ENCODE measurements at regions of chr15 and their contacts with region 1.

Region 1: GRCh38 chr15:90071208-90071807 is 31.0 kb downstream of the IDH2 start:
- DNase-seq: peak; percentile 62
- H3K4me3 ChIP-seq: no peak overlapping the region
- H3K27ac ChIP-seq: no peak overlapping the region
- H3K27me3 ChIP-seq: no peaks in the 10 kb centered on the region
- CTCF ChIP-seq: peak; percentile 84

Region 2: GRCh38 chr15:89898614-89899294 is 172.6 kb before region 1 on chr15:
- CTCF ChIA-PET with region 1: interaction called, 10 read pairs
- POLR2A ChIA-PET with region 1: no interaction called
- DNase-seq: no peak
- H3K4me3 ChIP-seq: no peak overlapping the region
- H3K27ac ChIP-seq: no peak overlapping the region
- H3K27me3 ChIP-seq: no peaks in the 10 kb centered on the region
- CTCF ChIP-seq: peak; percentile 62

Region 3: GRCh38 chr15:90053685-90054466 is 17.4 kb before region 1 on chr15:
- CTCF ChIA-PET with region 1: interaction called, 11 read pairs
- POLR2A ChIA-PET with region 1: interaction called, 3 read pairs
- DNase-seq: no peak
- H3K4me3 ChIP-seq: no peak overlapping the region
- H3K27ac ChIP-seq: no peak overlapping the region
- H3K27me3 ChIP-seq: no peaks in the 10 kb centered on the region
- CTCF ChIP-seq: no peak

Region 4: DNA sequence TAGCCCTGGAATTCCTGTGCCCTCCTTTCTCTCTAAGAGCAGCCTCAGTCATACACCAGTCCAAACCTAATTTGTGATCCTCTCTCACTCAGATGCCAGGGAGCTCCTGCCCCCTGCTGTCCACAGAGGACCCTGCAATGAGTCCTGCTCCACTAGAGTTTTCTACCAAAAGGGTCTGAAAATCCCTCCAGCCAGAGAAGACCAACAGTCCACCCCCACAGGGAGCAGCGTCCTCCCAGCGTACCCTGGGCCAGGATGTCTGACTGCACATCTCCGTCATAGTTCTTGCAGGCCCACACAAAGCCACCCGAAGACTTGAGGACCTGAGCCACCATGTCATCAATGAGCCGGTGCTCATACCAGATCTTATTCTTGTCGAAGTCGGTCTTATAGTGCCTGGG is 15.6 kb after region 1 on chr15:
- CTCF ChIA-PET with region 1: interaction called, 21 read pairs
- POLR2A ChIA-PET with region 1: interaction called, 8 read pairs
- DNase-seq: no peak
- H3K4me3 ChIP-seq: no peak overlapping the region
- H3K27ac ChIP-seq: no peak overlapping the region
- H3K27me3 ChIP-seq: no peaks in the 10 kb centered on the region
- CTCF ChIP-seq: peak; percentile 70